Activated CD4-positive, alpha-beta memory T cell treated with anti-CD3 and anti-CD28 coated beads for 36 hours (primary cell): ENCODE measurements at regions of chr22 and their contacts with region 1.

Region 1: DNA sequence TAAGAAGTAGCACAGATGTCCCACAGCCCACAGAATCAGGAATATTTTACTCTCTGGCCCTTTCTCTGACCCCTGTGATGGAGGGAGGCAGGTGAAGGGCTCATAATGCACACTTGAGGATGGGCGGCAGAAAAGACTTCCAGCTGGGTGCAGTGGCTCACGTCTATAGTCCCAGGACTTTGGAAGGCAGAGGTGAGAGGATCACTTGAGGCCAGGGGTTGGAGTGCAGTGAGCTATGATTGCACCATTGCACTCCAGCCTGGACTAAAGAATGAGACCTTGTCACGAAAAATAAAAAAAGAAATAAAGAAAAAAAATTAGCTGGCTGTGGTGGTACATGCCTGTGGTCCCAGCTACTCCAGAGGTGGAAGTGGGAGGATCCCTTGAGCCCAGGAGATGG is 13.5 kb upstream of the CRYBB3 start:
- DNase-seq: no peak
- H3K4me3 Mint-ChIP-seq: no peak overlapping the region
- H3K27ac Mint-ChIP-seq: no peak overlapping the region
- H3K4me1 Mint-ChIP-seq: no peaks in the 10 kb centered on the region
- H3K27me3 Mint-ChIP-seq: no peaks in the 10 kb centered on the region

Region 2: DNA sequence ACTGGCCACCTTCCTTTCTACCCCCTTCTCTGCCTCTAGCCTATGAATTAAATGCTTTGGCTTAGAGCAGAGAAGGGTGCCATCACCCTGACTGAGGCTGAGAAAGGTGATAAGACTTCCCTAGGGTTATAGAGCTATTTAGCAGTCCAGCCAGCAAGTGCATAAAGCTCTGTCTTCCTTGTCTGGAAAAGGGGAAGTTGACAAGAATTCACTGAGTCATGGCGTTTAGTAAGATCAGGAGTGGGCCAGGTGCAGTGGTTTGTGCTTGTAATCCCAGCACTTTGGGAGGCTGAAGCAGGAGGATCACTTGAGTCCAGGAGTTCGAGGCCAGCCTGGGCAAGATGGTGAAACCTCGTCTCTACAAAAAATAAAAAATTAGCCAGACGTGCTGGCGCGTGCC is 302.7 kb before region 1 on chr22:
- CTCF ChIA-PET with region 1: no interaction called
- POLR2A ChIA-PET with region 1: no interaction called
- intact Hi-C with region 1: no loop called
- DNase-seq: no peak
- H3K4me3 Mint-ChIP-seq: no peak overlapping the region
- H3K27ac Mint-ChIP-seq: no peak overlapping the region
- H3K4me1 Mint-ChIP-seq: no peaks in the 10 kb centered on the region
- H3K27me3 Mint-ChIP-seq: no peaks in the 10 kb centered on the region

Region 3: GRCh38 chr22:25013607-25014006 is 172.5 kb before region 1 on chr22:
- CTCF ChIA-PET with region 1: no interaction called
- POLR2A ChIA-PET with region 1: no interaction called
- intact Hi-C with region 1: no loop called
- DNase-seq: no peak
- H3K4me3 Mint-ChIP-seq: no peak overlapping the region
- H3K27ac Mint-ChIP-seq: no peak overlapping the region
- H3K4me1 Mint-ChIP-seq: no peaks in the 10 kb centered on the region
- H3K27me3 Mint-ChIP-seq: no peaks in the 10 kb centered on the region

Region 4: GRCh38 chr22:25202290-25202921 is 16.3 kb after region 1 on chr22:
- CTCF ChIA-PET with region 1: interaction called, 12 read pairs
- POLR2A ChIA-PET with region 1: no interaction called
- intact Hi-C with region 1: no loop called
- DNase-seq: peak; percentile 66
- H3K4me3 Mint-ChIP-seq: no peak overlapping the region
- H3K27ac Mint-ChIP-seq: no peak overlapping the region
- H3K4me1 Mint-ChIP-seq: no peaks in the 10 kb centered on the region
- H3K27me3 Mint-ChIP-seq: no peaks in the 10 kb centered on the region